PC-9 (cell line): ENCODE measurements at regions of chr5 and their contacts with region 1.

Region 1: GRCh38 chr5:160082614-160083500 is 36.4 kb downstream of the PWWP2A start:
- DNase-seq: peak; percentile 22 to 49
- H3K4me3 ChIP-seq: no peak overlapping the region
- H3K27ac ChIP-seq: no peak overlapping the region
- H3K4me1 ChIP-seq: peaks cover 7% of the 10 kb centered on the region
- H3K27me3 ChIP-seq: no peaks in the 10 kb centered on the region
- CTCF ChIP-seq: no peak

Region 2: DNA sequence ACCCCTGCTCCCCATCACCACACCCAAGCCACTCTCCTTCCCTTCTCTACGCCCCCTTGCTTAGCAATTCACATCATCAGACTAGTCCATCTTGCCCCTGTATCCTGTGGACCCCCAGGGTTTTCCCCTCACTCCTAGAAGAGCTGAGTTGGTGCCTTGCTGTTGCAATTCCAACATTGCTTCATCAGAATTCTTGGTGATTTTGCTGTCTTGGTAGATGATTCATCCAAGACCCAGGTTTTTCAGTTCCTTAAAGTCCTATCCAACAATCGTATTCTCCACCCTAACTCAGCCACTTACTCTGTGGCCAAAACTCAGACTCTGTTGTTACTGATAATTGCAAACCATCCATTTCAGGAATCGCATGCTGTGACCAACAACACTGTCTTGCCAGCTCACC is 250.9 kb after region 1 on chr5:
- CTCF ChIA-PET with region 1: interaction called, 15 read pairs
- POLR2A ChIA-PET with region 1: no interaction called
- intact Hi-C with region 1: no loop called
- DNase-seq: peak in 1 of 2 experiments; percentile 75
- H3K4me3 ChIP-seq: no peak overlapping the region
- H3K27ac ChIP-seq: peak overlapping the region; percentile 18
- H3K4me1 ChIP-seq: peaks cover 16% of the 10 kb centered on the region
- H3K27me3 ChIP-seq: no peaks in the 10 kb centered on the region
- CTCF ChIP-seq: no peak